ENCODE measurements at regions of chr6 and their contacts with region 1.

Region 1: GRCh38 chr6:38639498-38640215 is at the start of gene BTBD9:
- DNase-seq: peak; percentile 66 to 88 (median 80)
- H3K4me3 ChIP-seq: peak within 1 kb of the TSS; percentile 46 to 99 (median 92)
- H3K27ac ChIP-seq: peak within 1 kb of the TSS; percentile 79 to 99 (median 94)
- H3K27me3 ChIP-seq: no peaks in the 10 kb centered on the region
- CTCF ChIP-seq: peak in 8 of 56 donors; percentile 10 to 27 (median 22)
- total RNA-seq, gene BTBD9: 34.8 to 100 (median 67.6) TPM

Region 2: DNA sequence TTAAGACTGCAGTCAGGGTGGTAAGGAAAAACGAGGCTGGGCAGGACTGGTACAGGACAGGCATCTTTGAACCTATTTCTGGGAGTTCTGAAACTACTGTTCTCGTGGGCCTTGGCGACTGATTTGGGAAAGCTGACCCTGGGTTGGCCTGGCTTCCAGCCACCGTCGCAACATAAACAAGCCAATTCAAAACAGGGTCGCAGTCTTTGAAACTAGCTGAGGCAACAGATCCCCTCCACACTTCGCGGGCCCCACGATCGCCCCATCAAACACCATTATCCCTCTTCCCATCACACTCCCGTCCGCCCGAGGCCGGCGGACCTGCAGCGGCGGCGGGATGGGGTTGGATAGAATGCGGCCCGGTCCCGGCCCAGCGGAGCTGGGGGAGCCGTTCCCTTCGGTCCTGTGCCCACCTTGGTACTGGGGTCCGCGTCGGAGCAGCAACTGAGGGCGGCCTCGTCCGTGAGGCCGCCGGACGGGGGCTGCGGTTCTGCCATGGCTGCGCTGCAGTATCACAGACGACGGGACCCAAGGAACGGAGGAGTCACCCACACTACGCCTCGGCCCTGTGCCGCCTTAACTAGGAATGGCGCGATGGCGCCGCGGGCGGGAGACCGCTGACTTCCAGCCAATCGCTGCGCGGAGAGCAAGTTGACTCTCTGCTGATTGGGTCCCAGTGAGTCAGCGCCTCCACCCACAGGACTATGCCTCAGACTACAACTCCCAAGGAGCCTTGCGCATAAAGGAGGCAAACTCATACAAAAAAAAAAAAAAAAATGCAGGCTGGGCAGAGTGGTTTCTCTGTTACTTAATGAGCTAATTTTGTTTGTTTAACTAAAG is 63.1 kb after region 1 on chr6 and contains the start of gene GLO1:
- intact Hi-C with region 1: loop called (anchors 5 kb)
- DNase-seq: peak; percentile 98 to 99 (median 99)
- H3K4me3 ChIP-seq: peak within 1 kb of the TSS; percentile 58 to 93 (median 83)
- H3K27ac ChIP-seq: peak within 1 kb of the TSS; percentile 51 to 96 (median 88)
- H3K27me3 ChIP-seq: no peaks in the 10 kb centered on the region
- CTCF ChIP-seq: peak in 35 of 56 donors; percentile 5 to 55 (median 23)
- total RNA-seq, gene GLO1: 49.0 to 105 (median 77.9) TPM